ENCODE measurements at regions of chr10 and their contacts with region 1.

Region 1: GRCh38 chr10:96229568-96230030 is 41.8 kb downstream of the BLNK start:
- DNase-seq: peak; percentile 68 to 73
- ATAC-seq: peak in 7 of 8 donors; percentile 56 to 80 (median 64)
- H3K4me3 ChIP-seq: no peak overlapping the region
- H3K27ac ChIP-seq: no peak overlapping the region
- H3K4me1 ChIP-seq: peaks cover 0 to 8% (median 0%) of the 10 kb centered on the region in 9 donors
- H3K27me3 ChIP-seq: peaks cover 0 to 37% (median 3%) of the 10 kb centered on the region in 7 donors
- CTCF ChIP-seq: peak; percentile 31 to 69 (median 64)

Region 2: GRCh38 chr10:96275685-96276418 is 46.3 kb after region 1 on chr10:
- intact Hi-C with region 1: loop called in 1 of 10 experiments (anchors 5 kb)
- DNase-seq: peak; percentile 46 to 64
- ATAC-seq: peak; percentile 30 to 94 (median 78)
- H3K4me3 ChIP-seq: no peak overlapping the region
- H3K27ac ChIP-seq: peak overlapping the region in 1 of 10 donors; percentile 9
- H3K4me1 ChIP-seq: peaks cover 0 to 18% (median 4%) of the 10 kb centered on the region in 9 donors
- H3K27me3 ChIP-seq: peaks cover 0 to 5% (median 0%) of the 10 kb centered on the region in 7 donors
- CTCF ChIP-seq: no peak

Region 3: DNA sequence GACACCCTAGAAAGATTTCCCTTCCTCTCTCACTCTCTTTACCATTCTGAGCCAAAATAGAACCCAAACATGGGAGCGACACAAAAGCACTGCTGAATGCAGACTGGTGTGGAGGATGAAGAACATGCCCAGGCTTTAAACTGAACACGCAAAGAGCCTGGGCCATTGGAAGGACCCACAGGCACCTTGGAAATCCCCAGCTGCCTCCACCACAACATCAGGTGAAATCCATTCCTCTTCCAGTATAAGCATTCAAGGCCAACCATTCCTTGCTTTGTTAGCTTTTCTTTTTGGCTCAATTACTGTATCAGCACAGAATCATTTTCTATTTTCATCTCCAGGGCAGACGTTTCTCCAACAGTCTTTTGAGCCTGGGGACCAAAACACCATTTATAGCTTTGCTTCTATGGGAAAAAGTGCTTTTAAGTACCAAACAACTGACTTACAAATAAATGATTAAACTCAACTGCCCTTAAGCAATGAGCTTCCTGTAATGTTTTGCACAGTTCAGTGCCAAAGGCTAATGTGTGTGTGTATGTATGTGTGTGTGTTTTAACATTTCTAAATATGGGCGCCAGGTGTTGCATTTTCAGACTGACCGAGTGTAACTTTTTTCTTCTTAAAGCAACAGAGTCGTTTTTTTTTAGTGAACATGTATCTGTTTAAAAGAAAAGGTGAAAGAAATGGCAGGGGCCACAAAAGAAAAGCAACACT is 58.0 kb after region 1 on chr10:
- intact Hi-C with region 1: loop called in 9 of 10 experiments (anchors 2 to 5 kb)
- DNase-seq: no peak
- ATAC-seq: peak in 1 of 8 donors; percentile 37
- H3K4me3 ChIP-seq: no peak overlapping the region
- H3K27ac ChIP-seq: no peak overlapping the region
- H3K4me1 ChIP-seq: peaks cover 0 to 6% (median 0%) of the 10 kb centered on the region in 9 donors
- H3K27me3 ChIP-seq: peaks cover 0 to 48% (median 12%) of the 10 kb centered on the region in 7 donors
- CTCF ChIP-seq: no peak

Region 4: GRCh38 chr10:96292971-96293920 is 63.6 kb after region 1 on chr10:
- intact Hi-C with region 1: loop called (anchors 1 to 5 kb)
- DNase-seq: peak in 1 of 2 donors; percentile 15
- ATAC-seq: peak in 7 of 8 donors; percentile 64 to 86 (median 79)
- H3K4me3 ChIP-seq: no peak overlapping the region
- H3K27ac ChIP-seq: no peak overlapping the region
- H3K4me1 ChIP-seq: peaks cover 0 to 5% (median 0%) of the 10 kb centered on the region in 9 donors
- H3K27me3 ChIP-seq: peaks cover 0 to 68% (median 35%) of the 10 kb centered on the region in 7 donors
- CTCF ChIP-seq: peak; percentile 8 to 76 (median 64)

Measured in heart right ventricle (tissue), 16 donors.